Heart right ventricle (tissue), 16 donors: ENCODE measurements at regions of chr1 and their contacts with region 1.

Region 1: GRCh38 chr1:232620356-232620969 is 9.5 kb downstream of the SIPA1L2 start:
- DNase-seq: peak in 1 of 2 donors; percentile 87
- ATAC-seq: peak; percentile 87 to 95 (median 92)
- H3K4me3 ChIP-seq: peak overlapping the region in 4 of 10 donors; percentile 16 to 28 (median 21)
- H3K27ac ChIP-seq: peak overlapping the region; percentile 29 to 86 (median 78)
- H3K4me1 ChIP-seq: peaks cover 4 to 100% (median 80%) of the 10 kb centered on the region in 9 donors
- H3K27me3 ChIP-seq: no peaks in the 10 kb centered on the region
- CTCF ChIP-seq: no peak

Region 2: GRCh38 chr1:232319072-232319471 is 301.4 kb before region 1 on chr1:
- intact Hi-C with region 1: loop called in 3 of 10 experiments (anchors 5 to 10 kb)
- DNase-seq: peak; percentile 83 to 85
- ATAC-seq: peak; percentile 90 to 97 (median 95)
- H3K4me3 ChIP-seq: no peak overlapping the region
- H3K27ac ChIP-seq: peak overlapping the region; percentile 25 to 89 (median 78)
- H3K4me1 ChIP-seq: peaks cover 0 to 30% (median 3%) of the 10 kb centered on the region in 9 donors
- H3K27me3 ChIP-seq: no peaks in the 10 kb centered on the region
- CTCF ChIP-seq: no peak

Region 3: GRCh38 chr1:232435729-232436128 is 184.7 kb before region 1 on chr1:
- intact Hi-C with region 1: loop called in 4 of 10 experiments (anchors 5 to 10 kb)
- DNase-seq: peak; percentile 37 to 40
- ATAC-seq: peak in 6 of 8 donors; percentile 29 to 57 (median 46)
- H3K4me3 ChIP-seq: no peak overlapping the region
- H3K27ac ChIP-seq: peak overlapping the region in 5 of 10 donors; percentile 3 to 43 (median 18)
- H3K4me1 ChIP-seq: peaks cover 0 to 64% (median 37%) of the 10 kb centered on the region in 9 donors
- H3K27me3 ChIP-seq: no peaks in the 10 kb centered on the region
- CTCF ChIP-seq: no peak

Region 4: DNA sequence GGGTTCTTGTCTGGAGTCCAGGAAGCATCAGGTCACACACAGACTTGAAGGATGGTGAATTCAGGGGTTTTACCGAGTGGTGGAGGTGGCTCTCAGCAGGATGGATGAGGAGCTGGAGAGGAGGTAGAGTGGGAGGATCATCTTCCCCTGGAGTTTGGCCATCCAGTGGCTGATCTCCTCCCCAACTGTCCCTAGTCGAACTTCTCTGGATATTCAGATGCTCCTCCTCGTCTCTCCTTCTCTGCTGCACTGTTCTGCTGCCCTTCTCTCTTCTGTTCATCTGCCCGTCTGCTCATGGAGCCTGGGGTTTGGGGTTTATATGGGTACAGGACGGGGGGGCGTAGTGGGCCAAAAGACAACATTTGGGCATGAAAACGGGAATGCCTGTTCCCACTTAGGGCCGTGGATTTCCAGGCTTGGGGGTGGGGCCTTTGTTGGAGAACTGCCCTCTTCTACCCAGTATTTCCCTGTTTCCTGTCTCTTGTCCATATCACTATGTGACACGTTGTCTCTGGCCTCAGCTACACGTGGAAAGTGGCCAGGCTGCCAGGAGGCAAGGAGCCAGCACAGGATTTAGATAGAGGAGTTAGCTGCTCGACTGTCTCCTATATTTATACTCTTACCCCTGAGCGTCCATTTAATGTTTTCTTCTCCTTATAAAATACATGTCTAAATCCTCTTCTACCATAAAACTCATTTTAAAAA is 67.3 kb before region 1 on chr1:
- intact Hi-C with region 1: loop called in 4 of 10 experiments (anchors 2 to 10 kb)
- DNase-seq: peak; percentile 85 to 89
- ATAC-seq: peak; percentile 73 to 93 (median 90)
- H3K4me3 ChIP-seq: peak overlapping the region in 3 of 10 donors; percentile 2 to 13 (median 8)
- H3K27ac ChIP-seq: peak overlapping the region in 9 of 10 donors; percentile 7 to 87 (median 77)
- H3K4me1 ChIP-seq: peaks cover 4 to 95% (median 77%) of the 10 kb centered on the region in 9 donors
- H3K27me3 ChIP-seq: no peaks in the 10 kb centered on the region
- CTCF ChIP-seq: no peak

Region 5: DNA sequence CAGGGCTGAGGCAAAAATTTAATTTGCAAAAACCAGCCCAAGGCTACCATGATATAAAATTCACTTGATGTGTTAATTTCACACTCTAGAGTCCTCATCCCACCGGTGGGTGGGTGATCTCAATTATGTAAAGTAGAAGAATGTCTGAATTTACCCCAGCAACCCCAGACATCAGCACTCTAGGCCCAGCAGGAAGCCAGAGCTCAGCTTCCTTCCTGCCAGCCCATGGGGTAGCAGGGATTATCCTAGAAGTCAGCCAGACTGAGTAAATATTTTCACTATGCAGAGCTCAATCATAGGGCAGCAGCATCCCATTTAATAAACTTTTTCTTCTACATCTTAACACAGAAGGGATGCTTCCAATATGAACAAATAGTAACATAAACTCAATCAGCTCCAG is 61.5 kb before region 1 on chr1:
- intact Hi-C with region 1: loop called in 4 of 10 experiments (anchors 5 to 10 kb)
- DNase-seq: no peak
- ATAC-seq: no peak
- H3K4me3 ChIP-seq: no peak overlapping the region
- H3K27ac ChIP-seq: peak overlapping the region in 3 of 10 donors; percentile 4 to 52 (median 12)
- H3K4me1 ChIP-seq: peaks cover 9 to 97% (median 80%) of the 10 kb centered on the region in 9 donors
- H3K27me3 ChIP-seq: no peaks in the 10 kb centered on the region
- CTCF ChIP-seq: no peak

Region 6: GRCh38 chr1:232578651-232579195 is 41.7 kb before region 1 on chr1:
- intact Hi-C with region 1: loop called in 4 of 10 experiments (anchors 5 to 10 kb)
- DNase-seq: no peak
- ATAC-seq: peak; percentile 21 to 76 (median 58)
- H3K4me3 ChIP-seq: no peak overlapping the region
- H3K27ac ChIP-seq: peak overlapping the region in 9 of 10 donors; percentile 42 to 82 (median 63)
- H3K4me1 ChIP-seq: peaks cover 0 to 86% (median 56%) of the 10 kb centered on the region in 9 donors
- H3K27me3 ChIP-seq: no peaks in the 10 kb centered on the region
- CTCF ChIP-seq: no peak

Region 7: DNA sequence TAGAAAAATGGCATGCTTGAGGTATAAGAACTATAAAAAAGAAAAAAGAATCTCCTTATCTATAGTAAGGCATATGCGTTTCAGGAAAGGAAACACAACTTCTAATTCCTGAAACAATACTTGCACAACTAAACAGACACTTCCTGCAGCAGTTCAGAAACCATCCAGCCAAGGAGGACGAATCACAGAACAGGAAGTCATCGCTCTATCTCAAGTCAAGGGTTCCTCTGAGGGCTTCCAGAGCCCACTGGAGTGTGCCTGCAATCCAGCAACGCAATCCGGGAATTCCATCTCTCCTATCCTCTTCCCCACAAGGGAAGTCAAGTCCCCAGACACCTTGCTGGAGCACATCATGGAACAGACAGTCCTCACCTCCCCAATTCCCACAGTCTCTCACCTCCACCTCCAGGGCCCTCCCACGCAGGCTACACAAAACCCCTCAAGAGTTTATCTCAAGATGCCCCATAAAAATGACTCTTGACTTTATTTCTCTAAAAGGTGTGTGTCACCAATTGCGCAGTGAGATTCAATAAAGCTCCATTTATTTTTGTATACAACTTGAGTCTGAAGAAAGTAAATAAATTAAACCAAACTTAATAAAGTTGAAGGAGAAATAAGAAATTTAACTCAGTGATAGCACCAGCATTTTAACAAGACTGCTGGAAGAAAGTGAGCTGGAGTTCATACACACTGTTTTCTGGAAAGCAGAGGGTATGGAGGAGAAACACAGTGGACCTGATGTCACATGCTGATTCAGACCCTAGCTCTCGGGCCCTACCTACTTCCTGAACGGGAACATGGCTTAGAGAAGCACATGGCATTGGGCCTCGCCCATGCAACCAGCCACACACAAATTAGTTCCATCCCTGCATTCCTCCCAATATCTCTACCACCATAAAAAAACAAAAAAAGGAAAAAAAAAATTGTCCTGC is 30.4 kb before region 1 on chr1:
- intact Hi-C with region 1: loop called in 3 of 10 experiments (anchors 5 kb)
- DNase-seq: no peak
- ATAC-seq: peak in 7 of 8 donors; percentile 23 to 62 (median 53)
- H3K4me3 ChIP-seq: no peak overlapping the region
- H3K27ac ChIP-seq: peak overlapping the region in 9 of 10 donors; percentile 38 to 89 (median 66)
- H3K4me1 ChIP-seq: peaks cover 12 to 90% (median 68%) of the 10 kb centered on the region in 9 donors
- H3K27me3 ChIP-seq: no peaks in the 10 kb centered on the region
- CTCF ChIP-seq: no peak

Region 8: DNA sequence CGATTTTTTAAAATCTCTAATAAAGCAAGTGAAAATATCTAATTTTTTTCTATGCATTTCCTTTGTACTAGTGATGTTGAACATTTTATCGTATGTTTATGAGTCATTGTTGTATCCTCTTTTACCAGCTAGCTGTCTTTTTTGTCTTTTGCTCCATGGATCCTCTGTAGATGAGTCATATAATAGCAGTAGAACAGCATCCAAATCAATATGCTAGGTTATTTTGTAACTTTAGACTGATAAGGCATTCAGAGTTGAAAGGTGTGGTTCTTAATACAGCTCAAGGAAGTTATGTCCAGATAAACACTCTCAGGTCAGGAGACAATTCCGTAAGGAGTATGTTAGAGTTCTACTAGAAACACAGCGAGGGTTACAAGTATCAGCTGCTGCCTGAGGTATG is 216.6 kb after region 1 on chr1:
- intact Hi-C with region 1: no loop called
- DNase-seq: no peak
- ATAC-seq: no peak
- H3K4me3 ChIP-seq: no peak overlapping the region
- H3K27ac ChIP-seq: no peak overlapping the region
- H3K4me1 ChIP-seq: peaks cover 0 to 10% (median 0%) of the 10 kb centered on the region in 9 donors
- H3K27me3 ChIP-seq: no peaks in the 10 kb centered on the region
- CTCF ChIP-seq: no peak